Naive thymus-derived CD4-positive, alpha-beta T cell (primary cell): ENCODE measurements at regions of chr9 and their contacts with region 1.

Region 1: GRCh38 chr9:125746017-125746773 is 978 bp upstream of the PBX3 start:
- DNase-seq: peak; percentile 86 to 96 (median 89)
- ATAC-seq: peak; percentile 93
- H3K4me3 ChIP-seq: peak overlapping the region; percentile 87
- H3K4me3 Mint-ChIP-seq: peak overlapping the region; percentile 94 to 99 (median 94)
- H3K27ac ChIP-seq: peak overlapping the region; percentile 65
- H3K27ac Mint-ChIP-seq: peak overlapping the region; percentile 84 to 93 (median 90)
- H3K4me1 ChIP-seq: peaks cover 0 to 4% of the 10 kb centered on the region in 2 donors
- H3K4me1 Mint-ChIP-seq: peaks cover 9 to 41% (median 33%) of the 10 kb centered on the region in 7 donors
- H3K27me3 ChIP-seq: no peaks in the 10 kb centered on the region
- H3K27me3 Mint-ChIP-seq: peaks cover 0 to 41% (median 0%) of the 10 kb centered on the region in 5 donors

Region 2: GRCh38 chr9:124861342-124862229 is 884.6 kb before region 1 on chr9 and contains the starts of genes ARPC5L and RPL35:
- CTCF ChIA-PET with region 1: no interaction called
- POLR2A ChIA-PET with region 1: no interaction called
- intact Hi-C with region 1: loop called in 1 of 2 experiments (anchors 2 kb)
- DNase-seq: peak; percentile 91 to 97 (median 95)
- ATAC-seq: peak; percentile 98
- H3K4me3 ChIP-seq: peak within 1 kb of the TSS; percentile 88
- H3K4me3 Mint-ChIP-seq: peak within 1 kb of the TSS; percentile 89 to 99 (median 95)
- H3K27ac ChIP-seq: peak within 1 kb of the TSS; percentile 87
- H3K27ac Mint-ChIP-seq: peak within 1 kb of the TSS; percentile 91 to 99 (median 96)
- H3K4me1 ChIP-seq: peaks cover 7 to 16% of the 10 kb centered on the region in 2 donors
- H3K4me1 Mint-ChIP-seq: peaks cover 7 to 36% (median 29%) of the 10 kb centered on the region in 7 donors
- H3K27me3 ChIP-seq: no peaks in the 10 kb centered on the region
- H3K27me3 Mint-ChIP-seq: no peaks in the 10 kb centered on the region
- total RNA-seq, gene ARPC5L: 20.0 to 66.1 (median 33.1) TPM
- total RNA-seq, gene RPL35: 1,415 to 1,987 (median 1,778) TPM

Region 3: DNA sequence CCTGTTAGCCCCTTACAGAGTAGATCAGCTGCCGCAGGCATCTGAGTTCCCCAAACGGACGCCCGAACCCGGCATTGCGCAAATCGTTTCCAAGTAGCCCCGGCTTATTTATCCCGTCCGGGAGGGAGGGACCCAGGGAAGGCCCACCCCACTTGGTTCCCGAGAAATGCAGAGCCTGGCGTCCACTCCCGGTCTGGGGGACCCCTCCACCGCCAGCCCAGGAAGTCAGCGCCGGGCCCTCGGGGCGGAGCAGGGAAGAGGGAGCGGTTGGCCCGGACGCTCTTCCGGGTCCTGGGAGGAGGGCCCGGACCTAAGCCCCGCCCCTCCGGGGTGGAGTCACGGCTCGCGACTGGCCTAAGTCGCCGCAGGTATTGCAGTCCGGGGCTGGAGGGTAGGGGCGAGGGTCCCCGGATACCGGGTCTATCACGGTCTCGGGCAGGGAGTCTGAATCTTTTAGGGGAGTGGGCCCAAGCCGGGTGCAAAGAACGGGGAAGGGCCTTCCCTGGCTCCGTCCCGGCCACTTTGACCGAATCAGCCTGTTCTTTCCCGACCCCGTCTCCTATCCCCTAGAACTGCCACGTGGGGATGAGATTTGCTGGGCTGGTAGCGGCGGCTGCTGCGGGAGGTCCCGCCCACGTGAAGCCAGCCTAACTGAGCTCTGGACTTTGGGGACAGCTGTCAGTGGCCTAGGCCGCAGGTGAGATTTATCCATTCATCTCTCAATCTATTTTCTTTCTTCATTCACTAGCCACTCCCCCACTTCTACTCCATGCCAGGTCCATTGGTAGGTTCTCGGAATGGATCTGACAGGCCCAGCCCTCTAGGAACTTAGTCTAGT is 545.8 kb before region 1 on chr9 and contains the start of gene RABEPK:
- CTCF ChIA-PET with region 1: no interaction called
- POLR2A ChIA-PET with region 1: no interaction called
- intact Hi-C with region 1: loop called in 1 of 2 experiments (anchors 5 kb)
- DNase-seq: peak; percentile 76 to 97 (median 83)
- ATAC-seq: peak; percentile 99
- H3K4me3 ChIP-seq: peak within 1 kb of the TSS; percentile 90
- H3K4me3 Mint-ChIP-seq: peak within 1 kb of the TSS; percentile 80 to 96 (median 93)
- H3K27ac ChIP-seq: peak within 1 kb of the TSS; percentile 89
- H3K27ac Mint-ChIP-seq: peak within 1 kb of the TSS; percentile 80 to 96 (median 92)
- H3K4me1 ChIP-seq: peaks cover 20 to 34% of the 10 kb centered on the region in 2 donors
- H3K4me1 Mint-ChIP-seq: peaks cover 24 to 74% (median 56%) of the 10 kb centered on the region in 7 donors
- H3K27me3 ChIP-seq: no peaks in the 10 kb centered on the region
- H3K27me3 Mint-ChIP-seq: peaks cover 0 to 10% (median 0%) of the 10 kb centered on the region in 5 donors
- total RNA-seq, gene RABEPK: 10.7 to 19.5 (median 15.1) TPM

Region 4: GRCh38 chr9:125521462-125522327 is 224.5 kb before region 1 on chr9:
- CTCF ChIA-PET with region 1: no interaction called
- POLR2A ChIA-PET with region 1: no interaction called
- intact Hi-C with region 1: loop called in 1 of 2 experiments (anchors 2 kb)
- DNase-seq: peak in 8 of 9 donors; percentile 39 to 82 (median 72)
- ATAC-seq: peak; percentile 97
- H3K4me3 ChIP-seq: no peak overlapping the region
- H3K4me3 Mint-ChIP-seq: peak overlapping the region; percentile 28 to 81 (median 58)
- H3K27ac ChIP-seq: peak overlapping the region; percentile 16
- H3K27ac Mint-ChIP-seq: peak overlapping the region; percentile 59 to 96 (median 84)
- H3K4me1 ChIP-seq: peaks cover 8 to 20% of the 10 kb centered on the region in 2 donors
- H3K4me1 Mint-ChIP-seq: peaks cover 24 to 47% (median 40%) of the 10 kb centered on the region in 7 donors
- H3K27me3 ChIP-seq: no peaks in the 10 kb centered on the region
- H3K27me3 Mint-ChIP-seq: no peaks in the 10 kb centered on the region

Region 5: DNA sequence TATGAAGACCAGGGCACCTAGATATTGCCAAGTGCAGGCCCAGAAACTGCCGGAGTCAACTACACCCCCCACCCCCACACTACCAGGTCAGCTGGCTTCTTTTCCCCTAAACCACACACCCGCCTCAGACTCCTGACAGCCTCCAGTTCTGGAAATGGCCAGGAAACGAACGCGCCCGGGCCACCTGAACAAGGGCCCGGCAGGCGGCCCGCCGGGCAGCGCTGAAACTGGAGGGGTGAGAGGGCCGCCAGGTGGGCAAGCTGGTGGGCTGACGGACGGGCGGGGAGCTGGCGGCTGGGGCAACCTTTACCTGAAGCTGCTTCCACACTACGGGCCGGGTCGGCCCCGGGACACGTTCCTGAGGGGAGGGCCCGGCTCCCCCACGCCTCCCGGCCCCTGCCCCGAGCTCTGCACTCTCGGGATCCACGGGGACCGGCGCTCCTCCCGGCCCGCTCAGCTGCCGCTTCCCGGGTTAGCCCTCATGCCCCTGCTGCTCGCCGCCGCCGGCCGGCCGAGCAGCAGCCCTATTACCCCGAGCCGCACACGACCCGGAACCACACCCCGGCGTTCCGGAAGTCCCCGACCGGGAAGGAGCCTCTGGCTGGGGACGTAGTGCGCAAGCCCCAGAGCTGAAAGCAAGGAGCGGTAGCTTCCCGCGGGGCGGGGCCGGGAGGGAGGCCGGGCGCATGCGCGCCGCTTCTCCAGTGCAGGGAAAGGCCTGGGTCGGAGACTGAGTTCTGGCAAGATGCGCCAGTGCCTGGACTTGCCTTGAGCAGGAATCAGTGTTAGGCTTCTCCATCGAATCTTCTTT is 39.3 kb before region 1 on chr9 and contains the start of gene MAPKAP1:
- CTCF ChIA-PET with region 1: interaction called, 3 read pairs
- POLR2A ChIA-PET with region 1: interaction called, 5 read pairs
- intact Hi-C with region 1: loop called (anchors 1 kb)
- DNase-seq: peak; percentile 75 to 95 (median 84)
- ATAC-seq: peak; percentile 99
- H3K4me3 ChIP-seq: peak within 1 kb of the TSS; percentile 68
- H3K4me3 Mint-ChIP-seq: peak within 1 kb of the TSS; percentile 84 to 93 (median 88)
- H3K27ac ChIP-seq: peak within 1 kb of the TSS; percentile 77
- H3K27ac Mint-ChIP-seq: peak within 1 kb of the TSS; percentile 73 to 94 (median 87)
- H3K4me1 ChIP-seq: peaks cover 19 to 24% of the 10 kb centered on the region in 2 donors
- H3K4me1 Mint-ChIP-seq: peaks cover 21 to 59% (median 45%) of the 10 kb centered on the region in 7 donors
- H3K27me3 ChIP-seq: no peaks in the 10 kb centered on the region
- H3K27me3 Mint-ChIP-seq: peaks cover 0 to 6% (median 0%) of the 10 kb centered on the region in 5 donors
- total RNA-seq, gene MAPKAP1: 41.3 to 63.8 (median 55.8) TPM

Region 6: DNA sequence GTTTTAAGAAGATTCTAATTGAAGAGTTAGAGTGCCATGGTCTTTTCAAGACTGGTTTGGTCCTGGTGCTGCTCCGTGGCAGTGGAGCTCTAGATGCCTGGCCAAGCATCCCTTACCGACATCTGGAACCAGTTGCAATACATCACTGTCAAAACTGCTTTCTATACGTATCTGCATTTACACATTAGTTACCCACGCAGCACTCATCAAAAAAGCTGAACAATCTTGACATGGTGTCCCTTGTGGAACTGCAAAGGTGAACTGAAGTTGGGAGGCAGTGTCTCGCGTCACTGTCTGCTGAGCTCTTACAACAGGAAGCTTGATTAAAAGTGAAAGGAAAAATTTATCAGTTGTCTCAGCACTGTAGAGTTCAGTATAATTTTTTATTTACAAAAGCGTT is 83.5 kb after region 1 on chr9:
- CTCF ChIA-PET with region 1: no interaction called
- POLR2A ChIA-PET with region 1: interaction called, 10 read pairs
- intact Hi-C with region 1: loop called (anchors 1 to 2 kb)
- DNase-seq: peak; percentile 9 to 83 (median 74)
- ATAC-seq: peak; percentile 97
- H3K4me3 ChIP-seq: peak overlapping the region; percentile 82
- H3K4me3 Mint-ChIP-seq: peak overlapping the region; percentile 69 to 92 (median 90)
- H3K27ac ChIP-seq: peak overlapping the region; percentile 82
- H3K27ac Mint-ChIP-seq: peak overlapping the region; percentile 75 to 98 (median 95)
- H3K4me1 ChIP-seq: peaks cover 5 to 18% of the 10 kb centered on the region in 2 donors
- H3K4me1 Mint-ChIP-seq: peaks cover 11 to 53% (median 35%) of the 10 kb centered on the region in 7 donors
- H3K27me3 ChIP-seq: no peaks in the 10 kb centered on the region
- H3K27me3 Mint-ChIP-seq: no peaks in the 10 kb centered on the region

Region 7: DNA sequence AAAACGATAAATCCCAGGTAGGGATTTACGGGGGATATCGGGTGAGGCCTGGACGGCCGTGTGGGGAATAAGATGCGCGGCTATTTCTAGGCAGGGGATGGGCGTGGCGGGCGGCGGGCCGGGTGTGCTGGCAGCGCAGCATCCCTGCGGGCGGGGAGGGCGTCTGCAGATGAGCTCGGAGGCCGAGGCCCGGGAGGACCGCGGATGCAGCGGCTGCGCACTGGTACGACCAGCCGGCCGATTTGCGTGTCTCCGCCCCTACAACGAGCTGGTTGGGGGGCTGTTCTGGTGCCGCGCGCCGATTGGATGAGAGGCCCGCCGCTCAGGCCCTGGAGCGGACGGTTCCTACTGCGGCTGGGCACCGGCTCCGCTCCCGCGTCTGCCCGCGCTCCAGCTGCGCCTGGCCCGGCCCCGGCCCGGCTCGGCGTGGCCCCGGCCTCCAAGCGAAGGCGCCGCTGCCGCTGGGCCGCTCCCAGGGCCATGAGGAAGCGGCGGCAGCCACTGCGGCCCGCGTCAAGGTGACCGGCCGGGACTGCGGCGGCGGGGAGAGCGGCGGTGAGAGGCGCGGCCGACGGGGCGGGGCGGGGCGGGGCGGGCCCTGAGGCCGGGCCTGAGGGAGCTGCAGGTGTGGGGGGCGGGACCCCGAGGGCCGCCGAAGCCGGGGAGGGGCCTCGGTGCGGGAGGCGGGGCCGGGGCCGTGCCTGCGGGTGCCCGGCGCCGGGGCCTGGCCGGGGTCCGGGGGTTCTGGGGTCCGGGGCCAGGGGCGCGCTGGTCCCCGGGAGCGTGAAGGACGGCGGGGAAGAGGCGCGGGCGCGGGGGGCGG is 1168.5 kb after region 1 on chr9 and contains the start of gene RALGPS1:
- CTCF ChIA-PET with region 1: no interaction called
- POLR2A ChIA-PET with region 1: no interaction called
- intact Hi-C with region 1: loop called in 1 of 2 experiments (anchors 10 kb)
- DNase-seq: peak; percentile 68 to 88 (median 81)
- ATAC-seq: peak; percentile 98
- H3K4me3 ChIP-seq: peak within 1 kb of the TSS; percentile 47
- H3K4me3 Mint-ChIP-seq: peak within 1 kb of the TSS; percentile 73 to 90 (median 82)
- H3K27ac ChIP-seq: peak within 1 kb of the TSS; percentile 13
- H3K27ac Mint-ChIP-seq: peak within 1 kb of the TSS in 6 of 9 donors; percentile 14 to 89 (median 75)
- H3K4me1 ChIP-seq: no peaks in the 10 kb centered on the region
- H3K4me1 Mint-ChIP-seq: peaks cover 5 to 13% (median 7%) of the 10 kb centered on the region in 7 donors
- H3K27me3 ChIP-seq: no peaks in the 10 kb centered on the region
- H3K27me3 Mint-ChIP-seq: peaks cover 0 to 36% (median 0%) of the 10 kb centered on the region in 5 donors
- total RNA-seq, gene RALGPS1: 2.6 to 8.3 (median 5.8) TPM